ENCODE measurements at regions of chr9 and their contacts with region 1.

Region 1: GRCh38 chr9:109903515-109904138 is 123.6 kb downstream of the PALM2AKAP2 start:
- DNase-seq: peak; percentile 77 to 81
- H3K4me3 ChIP-seq: no peak overlapping the region
- H3K4me3 Mint-ChIP-seq: no peak overlapping the region
- H3K27ac Mint-ChIP-seq: no peak overlapping the region
- H3K4me1 ChIP-seq: no peaks in the 10 kb centered on the region
- H3K4me1 Mint-ChIP-seq: no peaks in the 10 kb centered on the region
- H3K27me3 ChIP-seq: no peaks in the 10 kb centered on the region
- H3K27me3 Mint-ChIP-seq: peaks cover 7% of the 10 kb centered on the region
- CTCF ChIP-seq: peak; percentile 86 to 87

Region 2: GRCh38 chr9:109705515-109705914 is 198.1 kb before region 1 on chr9:
- CTCF ChIA-PET with region 1: no interaction called
- POLR2A ChIA-PET with region 1: no interaction called
- intact Hi-C with region 1: no loop called
- DNase-seq: peak in 1 of 2 experiments; percentile 6
- H3K4me3 ChIP-seq: no peak overlapping the region
- H3K4me3 Mint-ChIP-seq: no peak overlapping the region
- H3K27ac Mint-ChIP-seq: no peak overlapping the region
- H3K4me1 ChIP-seq: no peaks in the 10 kb centered on the region
- H3K4me1 Mint-ChIP-seq: no peaks in the 10 kb centered on the region
- H3K27me3 ChIP-seq: no peaks in the 10 kb centered on the region
- H3K27me3 Mint-ChIP-seq: peaks cover 10% of the 10 kb centered on the region
- CTCF ChIP-seq: peak in 1 of 2 experiments; percentile 8

Region 3: DNA sequence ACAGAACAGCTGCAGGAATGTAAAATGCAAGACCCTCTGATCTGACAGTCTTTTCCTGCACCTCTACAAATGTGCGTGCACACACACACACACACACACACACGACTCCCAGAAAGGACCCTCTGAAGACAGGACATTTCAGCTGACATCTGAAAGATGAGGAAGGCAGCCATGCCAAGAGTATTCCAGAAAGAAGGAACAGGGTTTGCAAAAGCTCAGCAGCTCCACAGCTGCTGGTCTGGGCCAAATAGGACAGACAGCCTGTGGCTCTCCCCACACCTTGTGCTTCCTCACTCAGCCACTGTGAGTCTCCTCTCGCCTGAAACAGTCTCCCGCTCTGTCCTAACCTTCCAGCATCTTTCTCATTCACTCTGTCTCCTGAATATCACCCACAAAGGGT is 65.4 kb after region 1 on chr9:
- CTCF ChIA-PET with region 1: no interaction called
- POLR2A ChIA-PET with region 1: no interaction called
- intact Hi-C with region 1: loop called (anchors 2 kb)
- DNase-seq: peak; percentile 54 to 58
- H3K4me3 ChIP-seq: no peak overlapping the region
- H3K4me3 Mint-ChIP-seq: no peak overlapping the region
- H3K27ac Mint-ChIP-seq: no peak overlapping the region
- H3K4me1 ChIP-seq: no peaks in the 10 kb centered on the region
- H3K4me1 Mint-ChIP-seq: no peaks in the 10 kb centered on the region
- H3K27me3 ChIP-seq: no peaks in the 10 kb centered on the region
- H3K27me3 Mint-ChIP-seq: no peaks in the 10 kb centered on the region
- CTCF ChIP-seq: peak in 1 of 2 experiments; percentile 37

Region 4: DNA sequence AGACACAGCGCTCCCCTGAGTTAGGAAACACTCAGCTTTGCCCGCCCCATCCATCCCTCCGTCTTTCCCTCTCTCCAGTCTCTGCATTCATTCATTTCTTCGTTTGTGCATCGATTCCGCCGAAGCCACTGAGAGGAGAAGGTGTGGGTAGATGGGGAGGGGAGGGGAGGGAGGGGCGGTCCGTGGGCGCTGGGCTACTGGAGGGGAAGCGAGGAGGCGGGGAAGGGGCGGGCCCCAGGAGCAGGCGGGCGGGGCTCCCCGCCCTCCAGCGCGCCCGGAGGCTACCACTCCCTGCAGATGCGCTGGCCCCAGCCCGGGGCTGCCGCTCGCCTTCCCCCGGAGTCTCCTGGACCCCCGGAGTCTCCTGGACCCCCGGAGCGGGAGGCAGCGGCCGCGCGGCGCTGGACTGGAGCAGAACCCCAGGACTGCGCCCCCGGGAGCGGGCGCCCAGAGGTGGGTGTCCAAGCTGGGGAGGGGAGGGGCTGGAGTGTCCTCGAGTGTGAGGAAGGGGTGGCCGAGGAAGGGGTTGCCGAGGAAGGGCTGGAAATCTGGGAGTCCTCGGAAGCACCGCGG is 144.9 kb after region 1 on chr9:
- CTCF ChIA-PET with region 1: interaction called, 3 read pairs
- POLR2A ChIA-PET with region 1: interaction called, 3 read pairs
- intact Hi-C with region 1: loop called (anchors 2 kb)
- DNase-seq: peak; percentile 85 to 86
- H3K4me3 ChIP-seq: peak overlapping the region; percentile 63
- H3K4me3 Mint-ChIP-seq: peak overlapping the region; percentile 92
- H3K27ac Mint-ChIP-seq: peak overlapping the region; percentile 63
- H3K4me1 ChIP-seq: peaks cover 14% of the 10 kb centered on the region
- H3K4me1 Mint-ChIP-seq: peaks cover 22% of the 10 kb centered on the region
- H3K27me3 ChIP-seq: no peaks in the 10 kb centered on the region
- H3K27me3 Mint-ChIP-seq: no peaks in the 10 kb centered on the region
- CTCF ChIP-seq: no peak

Region 5: GRCh38 chr9:110058304-110058953 is 154.8 kb after region 1 on chr9:
- CTCF ChIA-PET with region 1: interaction called, 6 read pairs
- POLR2A ChIA-PET with region 1: no interaction called
- intact Hi-C with region 1: loop called (anchors 1 kb)
- DNase-seq: peak; percentile 78 to 79
- H3K4me3 ChIP-seq: no peak overlapping the region
- H3K4me3 Mint-ChIP-seq: no peak overlapping the region
- H3K27ac Mint-ChIP-seq: no peak overlapping the region
- H3K4me1 ChIP-seq: peaks cover 12% of the 10 kb centered on the region; the same call in 1 of the 2 replicates
- H3K4me1 Mint-ChIP-seq: peaks cover 18% of the 10 kb centered on the region
- H3K27me3 ChIP-seq: no peaks in the 10 kb centered on the region
- H3K27me3 Mint-ChIP-seq: no peaks in the 10 kb centered on the region
- CTCF ChIP-seq: peak; percentile 68 to 69

Region 6: DNA sequence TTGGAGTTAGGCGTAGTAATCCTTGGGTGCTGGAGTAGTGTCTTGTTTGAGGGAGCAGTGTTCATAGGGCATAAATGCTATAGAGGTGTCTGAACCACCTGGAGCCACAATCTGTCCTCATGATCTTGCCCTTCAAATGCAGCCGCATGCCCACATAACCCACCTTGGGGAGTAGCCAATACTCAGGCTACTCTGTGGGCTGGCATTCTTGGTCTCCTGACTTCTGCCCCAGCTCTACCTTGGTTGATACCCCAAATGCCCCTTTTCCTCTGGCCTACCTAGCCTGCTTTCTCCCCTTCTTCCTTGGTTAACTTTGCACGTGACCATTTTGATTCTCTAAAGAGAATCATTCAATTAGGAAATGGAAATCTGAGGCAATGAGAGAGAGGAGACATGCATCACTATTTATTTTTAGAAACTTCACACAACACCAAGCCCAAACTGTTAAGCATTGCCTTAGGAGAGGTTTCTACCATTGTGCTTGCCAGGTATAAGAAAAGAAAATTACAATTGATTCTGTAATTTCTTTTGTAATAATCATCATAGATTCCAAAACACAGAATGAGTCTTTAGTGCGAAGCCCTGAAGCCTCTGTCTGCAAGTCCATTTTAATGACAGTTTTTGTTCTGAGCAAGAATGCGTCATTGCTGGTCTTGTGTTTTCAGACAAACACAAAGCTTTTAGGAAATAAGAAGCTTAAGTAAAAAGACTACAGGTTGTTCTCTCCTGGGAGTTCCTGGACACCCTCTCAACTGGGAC is 169.1 kb after region 1 on chr9:
- CTCF ChIA-PET with region 1: no interaction called
- POLR2A ChIA-PET with region 1: no interaction called
- intact Hi-C with region 1: no loop called
- DNase-seq: no peak
- H3K4me3 ChIP-seq: no peak overlapping the region
- H3K4me3 Mint-ChIP-seq: no peak overlapping the region
- H3K27ac Mint-ChIP-seq: no peak overlapping the region
- H3K4me1 ChIP-seq: peaks cover 22% of the 10 kb centered on the region
- H3K4me1 Mint-ChIP-seq: peaks cover 14% of the 10 kb centered on the region
- H3K27me3 ChIP-seq: no peaks in the 10 kb centered on the region
- H3K27me3 Mint-ChIP-seq: no peaks in the 10 kb centered on the region
- CTCF ChIP-seq: no peak

Region 7: DNA sequence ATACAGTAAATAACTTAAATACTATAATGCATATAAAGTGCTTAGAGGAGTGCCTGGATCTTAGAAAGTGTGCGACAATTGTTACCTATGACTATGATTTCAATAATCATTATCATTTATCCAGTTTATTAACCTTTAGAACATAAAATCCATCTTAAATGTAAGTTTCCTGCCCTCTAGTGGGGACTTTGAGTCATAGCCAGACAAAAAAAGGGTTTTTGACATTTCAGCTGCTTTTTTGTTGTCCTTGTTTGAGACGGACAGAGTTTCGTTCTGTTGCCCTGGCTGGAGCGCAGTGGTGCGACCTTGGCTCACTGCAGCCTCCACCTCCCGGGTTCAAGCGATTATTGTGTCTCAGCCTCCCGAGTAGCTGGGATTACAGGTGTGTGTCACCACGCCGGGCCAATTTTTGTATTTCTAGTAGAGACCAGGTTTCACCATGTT is 314.1 kb after region 1 on chr9:
- CTCF ChIA-PET with region 1: interaction called, 3 read pairs
- POLR2A ChIA-PET with region 1: no interaction called
- intact Hi-C with region 1: loop called (anchors 2 kb)
- DNase-seq: no peak
- H3K4me3 ChIP-seq: no peak overlapping the region
- H3K4me3 Mint-ChIP-seq: no peak overlapping the region
- H3K27ac Mint-ChIP-seq: no peak overlapping the region
- H3K4me1 ChIP-seq: peaks cover 80% of the 10 kb centered on the region
- H3K4me1 Mint-ChIP-seq: peaks cover 47% of the 10 kb centered on the region
- H3K27me3 ChIP-seq: no peaks in the 10 kb centered on the region
- H3K27me3 Mint-ChIP-seq: no peaks in the 10 kb centered on the region
- CTCF ChIP-seq: peak; percentile 61 to 63

Region 8: GRCh38 chr9:110707419-110707818 is 803.8 kb after region 1 on chr9:
- CTCF ChIA-PET with region 1: no interaction called
- POLR2A ChIA-PET with region 1: no interaction called
- intact Hi-C with region 1: loop called (anchors 5 kb)
- DNase-seq: no peak
- H3K4me3 ChIP-seq: no peak overlapping the region
- H3K4me3 Mint-ChIP-seq: no peak overlapping the region
- H3K27ac Mint-ChIP-seq: no peak overlapping the region
- H3K4me1 ChIP-seq: peaks cover 15% of the 10 kb centered on the region
- H3K4me1 Mint-ChIP-seq: peaks cover 12% of the 10 kb centered on the region
- H3K27me3 ChIP-seq: no peaks in the 10 kb centered on the region
- H3K27me3 Mint-ChIP-seq: no peaks in the 10 kb centered on the region
- CTCF ChIP-seq: no peak